ENCODE measurements at regions of chr19 and their contacts with region 1.

Region 1: DNA sequence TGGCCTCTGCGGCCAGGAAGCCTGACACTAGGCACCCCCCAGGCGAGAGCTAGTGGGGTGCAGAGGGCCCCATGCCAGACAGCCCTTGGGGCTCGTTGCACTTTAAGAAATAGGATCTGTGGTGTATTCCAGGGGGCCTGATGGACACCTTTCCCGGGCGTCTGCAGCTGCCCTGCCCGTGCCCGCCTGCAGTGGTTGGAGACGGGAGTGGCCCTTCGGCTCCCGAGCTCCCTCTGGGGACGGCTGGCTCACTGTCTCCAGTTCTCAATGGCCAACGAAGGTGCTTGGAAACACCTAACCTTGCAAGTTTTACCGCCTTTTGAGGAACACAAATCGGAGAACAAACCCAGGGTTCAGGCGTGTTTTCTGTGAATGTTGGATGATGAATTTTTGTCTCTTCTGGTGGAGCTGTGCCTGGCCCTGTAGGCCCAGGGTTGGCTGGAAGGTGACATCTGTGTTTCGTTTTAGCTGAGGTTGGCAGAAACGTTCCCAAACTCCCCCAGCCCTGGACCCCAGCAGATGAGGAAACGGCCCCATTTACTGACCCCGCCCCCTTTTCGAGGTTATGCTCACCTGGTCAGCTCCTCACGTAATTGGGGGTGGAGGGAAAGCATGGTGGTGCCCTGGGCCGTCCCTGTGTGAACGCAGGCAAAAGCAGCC is 17.4 kb upstream of the NPAS1 start:
- DNase-seq: no peak
- ATAC-seq: peak; percentile 66; the same call in 1 of the 2 replicates
- H3K4me3 ChIP-seq: no peak overlapping the region
- H3K27ac ChIP-seq: no peak overlapping the region
- H3K4me1 ChIP-seq: peaks cover 8% of the 10 kb centered on the region
- H3K27me3 ChIP-seq: no peaks in the 10 kb centered on the region
- CTCF ChIP-seq: no peak; the same call in 1 of the 2 replicates

Region 2: GRCh38 chr19:46878613-46879375 is 123.4 kb before region 1 on chr19:
- CTCF ChIA-PET with region 1: no interaction called
- POLR2A ChIA-PET with region 1: interaction called, 12 read pairs
- in situ Hi-C with region 1: no loop called
- intact Hi-C with region 1: no loop called
- DNase-seq: no peak
- ATAC-seq: peak; percentile 69
- H3K4me3 ChIP-seq: no peak overlapping the region
- H3K27ac ChIP-seq: peak overlapping the region; percentile 73
- H3K4me1 ChIP-seq: peaks cover 39% of the 10 kb centered on the region
- H3K27me3 ChIP-seq: no peaks in the 10 kb centered on the region
- CTCF ChIP-seq: no peak